CD4-positive, alpha-beta memory T cell (primary cell): ENCODE measurements at regions of chr17 and their contacts with region 1.

Region 1: GRCh38 chr17:78970834-78971773 is 8.6 kb downstream of the LGALS3BP start:
- DNase-seq: peak; percentile 63 to 75 (median 66)
- H3K4me3 ChIP-seq: no peak overlapping the region
- H3K4me3 Mint-ChIP-seq: no peak overlapping the region
- H3K27ac ChIP-seq: no peak overlapping the region
- H3K27ac Mint-ChIP-seq: peak overlapping the region; percentile 27 to 88 (median 57)
- H3K4me1 ChIP-seq: peaks cover 5% of the 10 kb centered on the region
- H3K4me1 Mint-ChIP-seq: peaks cover 5 to 15% (median 10%) of the 10 kb centered on the region in 4 donors
- H3K27me3 ChIP-seq: no peaks in the 10 kb centered on the region
- H3K27me3 Mint-ChIP-seq: no peaks in the 10 kb centered on the region

Region 2: DNA sequence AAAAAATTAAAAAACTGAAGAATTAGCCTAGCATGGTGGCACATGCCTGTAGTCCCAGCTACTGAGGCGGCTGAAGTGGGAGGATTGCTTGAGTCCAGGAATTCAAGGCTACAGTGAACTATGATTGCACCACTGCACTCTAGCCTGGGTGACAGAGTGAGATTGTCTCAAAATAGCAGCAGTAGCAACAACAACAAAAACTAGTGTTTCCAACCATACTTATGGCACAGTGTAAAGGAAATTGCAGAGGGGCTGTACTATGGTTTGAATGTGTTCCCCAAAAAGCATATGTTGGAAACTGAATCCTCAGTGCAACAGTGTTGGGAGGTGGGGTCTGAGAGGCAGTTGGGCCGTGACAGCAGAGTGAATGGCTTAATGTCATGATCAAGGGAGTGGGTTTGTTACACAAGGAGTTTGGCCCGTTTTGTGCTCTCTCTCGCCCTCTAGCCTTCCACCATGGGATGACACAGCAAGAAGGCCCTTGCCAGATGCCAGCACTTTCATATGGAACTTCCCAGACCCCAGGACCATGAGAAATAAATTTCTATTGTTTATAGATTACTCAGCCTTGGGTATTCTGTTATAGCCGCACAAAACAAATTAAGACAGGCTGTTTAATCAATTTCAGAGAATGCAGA is 522.6 kb before region 1 on chr17:
- CTCF ChIA-PET with region 1: no interaction called
- POLR2A ChIA-PET with region 1: no interaction called
- intact Hi-C with region 1: loop called (anchors 5 kb)
- DNase-seq: no peak
- H3K4me3 ChIP-seq: no peak overlapping the region
- H3K4me3 Mint-ChIP-seq: no peak overlapping the region
- H3K27ac ChIP-seq: no peak overlapping the region
- H3K27ac Mint-ChIP-seq: peak overlapping the region in 1 of 7 donors; percentile 26
- H3K4me1 ChIP-seq: no peaks in the 10 kb centered on the region
- H3K4me1 Mint-ChIP-seq: peaks cover 0 to 2% (median 0%) of the 10 kb centered on the region in 4 donors
- H3K27me3 ChIP-seq: no peaks in the 10 kb centered on the region
- H3K27me3 Mint-ChIP-seq: no peaks in the 10 kb centered on the region

Region 3: GRCh38 chr17:78497115-78497540 is 474.0 kb before region 1 on chr17:
- CTCF ChIA-PET with region 1: interaction called, 8 read pairs
- POLR2A ChIA-PET with region 1: no interaction called
- intact Hi-C with region 1: loop called (anchors 1 kb)
- DNase-seq: peak; percentile 47 to 63 (median 58)
- H3K4me3 ChIP-seq: no peak overlapping the region
- H3K4me3 Mint-ChIP-seq: no peak overlapping the region
- H3K27ac ChIP-seq: no peak overlapping the region
- H3K27ac Mint-ChIP-seq: no peak overlapping the region
- H3K4me1 ChIP-seq: no peaks in the 10 kb centered on the region
- H3K4me1 Mint-ChIP-seq: no peaks in the 10 kb centered on the region
- H3K27me3 ChIP-seq: no peaks in the 10 kb centered on the region
- H3K27me3 Mint-ChIP-seq: no peaks in the 10 kb centered on the region

Region 4: GRCh38 chr17:78865682-78866390 is 105.3 kb before region 1 on chr17:
- CTCF ChIA-PET with region 1: interaction called, 60 read pairs
- POLR2A ChIA-PET with region 1: no interaction called
- intact Hi-C with region 1: no loop called
- DNase-seq: peak in 4 of 5 donors; percentile 40 to 61 (median 52)
- H3K4me3 ChIP-seq: no peak overlapping the region
- H3K4me3 Mint-ChIP-seq: peak overlapping the region in 1 of 8 donors; percentile 10
- H3K27ac ChIP-seq: no peak overlapping the region
- H3K27ac Mint-ChIP-seq: peak overlapping the region in 1 of 7 donors; percentile 37
- H3K4me1 ChIP-seq: no peaks in the 10 kb centered on the region
- H3K4me1 Mint-ChIP-seq: peaks cover 0 to 3% (median 1%) of the 10 kb centered on the region in 4 donors
- H3K27me3 ChIP-seq: no peaks in the 10 kb centered on the region
- H3K27me3 Mint-ChIP-seq: peaks cover 7 to 8% of the 10 kb centered on the region in 2 donors

Region 5: DNA sequence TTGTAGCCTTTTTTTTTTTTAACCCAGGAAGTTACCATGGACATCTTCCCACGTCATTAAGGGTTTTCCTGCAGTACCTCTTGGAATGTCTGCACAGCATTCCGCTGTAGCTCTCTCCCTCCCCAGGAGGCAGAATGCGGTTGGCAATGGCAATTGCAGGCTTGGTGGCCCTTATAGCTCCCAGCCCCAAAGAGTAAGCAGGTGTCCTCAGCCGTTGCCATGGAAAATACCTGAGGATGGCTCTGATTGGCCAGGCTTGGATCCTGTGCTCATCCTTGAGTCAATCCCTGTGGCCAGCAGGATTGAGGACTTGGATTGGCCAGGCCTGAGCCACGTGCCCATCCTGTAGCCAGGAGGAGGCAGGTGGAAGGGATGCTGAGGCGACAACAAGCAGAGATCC is 30.4 kb before region 1 on chr17:
- CTCF ChIA-PET with region 1: interaction called, 11 read pairs
- POLR2A ChIA-PET with region 1: no interaction called
- intact Hi-C with region 1: no loop called
- DNase-seq: no peak
- H3K4me3 ChIP-seq: no peak overlapping the region
- H3K4me3 Mint-ChIP-seq: no peak overlapping the region
- H3K27ac ChIP-seq: no peak overlapping the region
- H3K27ac Mint-ChIP-seq: peak overlapping the region in 1 of 7 donors; percentile 36
- H3K4me1 ChIP-seq: no peaks in the 10 kb centered on the region
- H3K4me1 Mint-ChIP-seq: no peaks in the 10 kb centered on the region
- H3K27me3 ChIP-seq: no peaks in the 10 kb centered on the region
- H3K27me3 Mint-ChIP-seq: peaks cover 1 to 6% of the 10 kb centered on the region in 2 donors